ENCODE measurements at regions of chr5 and their contacts with region 1.

Region 1: DNA sequence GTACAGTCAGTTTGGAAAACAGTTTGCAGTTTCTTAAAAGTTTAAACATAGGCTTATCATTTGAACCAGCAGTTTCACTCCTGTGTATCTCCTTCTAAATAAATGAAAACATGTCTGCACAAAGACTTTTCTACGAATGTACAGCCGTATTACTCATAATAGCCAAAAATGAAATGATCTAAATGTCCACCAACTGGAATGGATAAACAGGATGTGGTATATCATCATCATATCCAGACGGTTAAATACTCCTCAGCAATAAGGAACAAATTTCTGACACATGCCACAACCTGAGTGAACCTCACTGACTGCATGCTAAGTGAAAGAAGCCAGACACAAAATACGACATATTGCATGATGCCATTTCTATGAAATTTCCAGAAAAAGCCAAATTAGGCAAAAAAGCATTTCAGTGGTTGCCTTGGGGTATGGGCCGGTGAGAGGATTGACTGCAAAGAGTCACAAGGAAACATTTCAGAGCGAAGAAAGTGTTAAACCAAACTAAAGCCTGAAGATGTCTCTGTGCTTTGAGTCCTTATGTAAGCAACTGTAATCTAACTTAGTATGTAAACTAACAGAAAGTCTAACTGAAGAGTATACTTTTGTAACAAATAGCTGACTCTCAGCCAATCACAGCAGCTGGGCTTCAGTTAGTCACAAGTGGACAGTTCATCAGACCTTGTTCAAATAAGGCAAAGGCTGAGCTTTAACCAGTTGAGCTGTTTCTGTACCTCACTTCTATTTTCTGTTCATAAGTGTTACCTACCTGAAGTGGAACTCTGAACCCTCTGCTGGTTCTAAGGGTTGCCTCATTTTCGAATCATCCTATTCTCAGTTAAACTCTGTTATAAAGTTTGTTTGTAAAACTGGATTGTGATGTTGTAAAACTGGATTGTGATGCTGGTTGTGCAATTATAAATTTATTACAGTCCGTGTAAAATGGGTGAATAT is 65.2 kb downstream of the TRIO start:
- DNase-seq: no peak
- ATAC-seq: peak; percentile 29
- H3K4me3 Mint-ChIP-seq: peak overlapping the region; percentile 62
- H3K27ac Mint-ChIP-seq: peak overlapping the region; percentile 90
- H3K4me1 Mint-ChIP-seq: peaks cover 88% of the 10 kb centered on the region
- H3K27me3 Mint-ChIP-seq: no peaks in the 10 kb centered on the region
- CTCF ChIP-seq: no peak

Region 2: GRCh38 chr5:13987843-13988464 is 220.4 kb before region 1 on chr5:
- CTCF ChIA-PET with region 1: no interaction called
- POLR2A ChIA-PET with region 1: no interaction called
- intact Hi-C with region 1: loop called (anchors 5 kb)
- DNase-seq: no peak
- ATAC-seq: peak; percentile 50
- H3K4me3 Mint-ChIP-seq: no peak overlapping the region
- H3K27ac Mint-ChIP-seq: no peak overlapping the region
- H3K4me1 Mint-ChIP-seq: peaks cover 2% of the 10 kb centered on the region
- H3K27me3 Mint-ChIP-seq: peaks cover 15% of the 10 kb centered on the region
- CTCF ChIP-seq: peak; percentile 86

Region 3: GRCh38 chr5:14142827-14143548 is 65.4 kb before region 1 on chr5 and contains the start of gene TRIO:
- CTCF ChIA-PET with region 1: interaction called, 8 read pairs
- POLR2A ChIA-PET with region 1: interaction called, 46 read pairs
- intact Hi-C with region 1: loop called (anchors 1 kb)
- DNase-seq: peak; percentile 89
- ATAC-seq: peak; percentile 54
- H3K4me3 Mint-ChIP-seq: peak within 1 kb of the TSS; percentile 89
- H3K27ac Mint-ChIP-seq: peak within 1 kb of the TSS; percentile 94
- H3K4me1 Mint-ChIP-seq: peaks cover 37% of the 10 kb centered on the region
- H3K27me3 Mint-ChIP-seq: peaks cover 2% of the 10 kb centered on the region
- CTCF ChIP-seq: no peak
- total RNA-seq, gene TRIO: 191 and 223 TPM in 2 replicates

Region 4: GRCh38 chr5:14174230-14174637 is 34.1 kb before region 1 on chr5:
- CTCF ChIA-PET with region 1: interaction called, 4 read pairs
- POLR2A ChIA-PET with region 1: interaction called, 5 read pairs
- intact Hi-C with region 1: loop called (anchors 2 kb)
- DNase-seq: no peak
- ATAC-seq: peak; percentile 68
- H3K4me3 Mint-ChIP-seq: peak overlapping the region; percentile 78
- H3K27ac Mint-ChIP-seq: peak overlapping the region; percentile 93
- H3K4me1 Mint-ChIP-seq: peaks cover 83% of the 10 kb centered on the region
- H3K27me3 Mint-ChIP-seq: no peaks in the 10 kb centered on the region
- CTCF ChIP-seq: no peak

Region 5: DNA sequence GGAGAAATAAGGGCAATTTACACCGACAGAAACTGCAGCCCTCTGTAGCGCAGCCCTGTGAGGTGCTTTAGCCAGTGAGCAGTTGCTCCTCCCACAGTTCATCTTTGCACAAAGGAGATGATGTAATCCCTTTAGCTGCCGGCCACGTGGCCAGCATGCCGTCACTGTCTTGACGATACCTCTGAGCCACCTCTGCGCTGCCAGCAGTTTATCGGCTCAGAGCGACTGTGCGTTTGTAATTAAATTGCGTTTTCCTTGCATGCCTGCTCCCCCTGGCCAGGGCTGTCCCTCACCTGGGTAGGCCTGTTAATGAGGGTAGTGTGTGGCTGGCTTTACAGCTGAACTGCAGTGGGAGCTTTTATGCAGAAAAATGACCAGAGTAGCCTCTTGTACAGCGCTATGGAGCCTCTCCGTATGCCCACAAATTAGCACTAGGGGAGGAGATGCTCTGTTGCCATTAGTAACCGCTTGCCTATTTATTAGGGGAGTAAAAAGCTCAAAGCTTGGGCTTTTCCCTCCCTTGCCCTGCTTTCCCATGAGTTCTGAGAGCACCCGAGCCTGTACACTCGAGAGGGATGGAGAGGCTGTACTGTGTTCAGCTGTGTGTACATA is 41.8 kb after region 1 on chr5:
- CTCF ChIA-PET with region 1: interaction called, 3 read pairs
- POLR2A ChIA-PET with region 1: interaction called, 27 read pairs
- intact Hi-C with region 1: loop called (anchors 1 kb)
- DNase-seq: no peak
- ATAC-seq: peak; percentile 22
- H3K4me3 Mint-ChIP-seq: peak overlapping the region; percentile 55
- H3K27ac Mint-ChIP-seq: peak overlapping the region; percentile 87
- H3K4me1 Mint-ChIP-seq: peaks cover 89% of the 10 kb centered on the region
- H3K27me3 Mint-ChIP-seq: no peaks in the 10 kb centered on the region
- CTCF ChIP-seq: no peak

Region 6: DNA sequence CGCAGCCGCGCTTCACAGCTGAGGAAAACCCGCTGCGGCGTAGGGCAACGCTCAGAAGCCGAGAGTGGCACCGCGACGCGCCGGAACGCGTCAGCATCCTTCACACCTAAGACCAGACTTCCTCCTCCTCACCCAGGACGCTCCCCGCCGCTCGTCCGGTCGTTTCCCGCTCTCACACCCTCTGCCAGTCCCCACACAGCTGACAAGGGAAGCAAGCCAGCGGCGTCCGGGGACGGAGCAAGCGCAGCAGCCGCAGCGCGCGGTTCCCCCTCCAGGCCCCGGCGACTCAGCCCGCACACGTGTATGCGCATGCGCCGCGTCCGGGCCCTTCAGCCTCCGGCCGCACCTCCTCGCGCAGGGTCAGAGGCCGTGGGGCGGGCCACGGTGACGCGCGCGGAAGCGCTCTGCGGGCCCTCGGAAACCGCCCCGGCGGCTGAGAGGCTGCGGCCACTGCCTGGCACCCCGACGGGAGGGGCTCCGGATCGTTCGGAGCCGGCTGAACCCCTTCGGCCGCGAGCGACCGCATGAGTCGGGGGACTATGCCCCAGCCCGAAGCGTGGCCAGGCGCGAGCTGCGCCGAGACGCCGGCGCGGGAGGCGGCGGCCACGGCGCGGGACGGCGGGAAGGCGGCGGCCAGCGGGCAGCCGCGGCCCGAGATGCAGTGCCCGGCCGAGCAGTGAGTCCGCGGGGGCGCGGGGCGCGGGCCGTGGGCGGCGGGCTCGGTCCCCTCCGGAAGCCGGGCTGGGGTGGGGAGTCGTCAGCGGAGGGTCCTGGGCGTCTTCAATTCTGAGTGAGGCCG is 456.2 kb after region 1 on chr5 and contains the start of gene OTULIN:
- CTCF ChIA-PET with region 1: no interaction called
- POLR2A ChIA-PET with region 1: interaction called, 3 read pairs
- intact Hi-C with region 1: loop called (anchors 2 kb)
- DNase-seq: peak; percentile 90
- ATAC-seq: peak; percentile 78
- H3K4me3 Mint-ChIP-seq: peak within 1 kb of the TSS; percentile 97
- H3K27ac Mint-ChIP-seq: peak within 1 kb of the TSS; percentile 99
- H3K4me1 Mint-ChIP-seq: peaks cover 87% of the 10 kb centered on the region
- H3K27me3 Mint-ChIP-seq: no peaks in the 10 kb centered on the region
- CTCF ChIP-seq: no peak
- total RNA-seq, gene OTULIN: 94.0 and 96.5 TPM in 2 replicates